Mammary epithelial cell (primary cell): ENCODE measurements at regions of chr3 and their contacts with region 1.

Region 1: GRCh38 chr3:105366326-105367062 is at the start of gene ALCAM:
- DNase-seq: peak; percentile 99
- H3K4me3 ChIP-seq: peak within 1 kb of the TSS; percentile 75 to 91 (median 82)
- H3K27ac ChIP-seq: peak within 1 kb of the TSS; percentile 98
- H3K4me1 ChIP-seq: peaks cover 39% of the 10 kb centered on the region
- H3K27me3 ChIP-seq: no peaks in the 10 kb centered on the region
- CTCF ChIP-seq: peak; percentile 55 to 82
- total RNA-seq, gene ALCAM: 67.6 to 88.4 TPM

Region 2: DNA sequence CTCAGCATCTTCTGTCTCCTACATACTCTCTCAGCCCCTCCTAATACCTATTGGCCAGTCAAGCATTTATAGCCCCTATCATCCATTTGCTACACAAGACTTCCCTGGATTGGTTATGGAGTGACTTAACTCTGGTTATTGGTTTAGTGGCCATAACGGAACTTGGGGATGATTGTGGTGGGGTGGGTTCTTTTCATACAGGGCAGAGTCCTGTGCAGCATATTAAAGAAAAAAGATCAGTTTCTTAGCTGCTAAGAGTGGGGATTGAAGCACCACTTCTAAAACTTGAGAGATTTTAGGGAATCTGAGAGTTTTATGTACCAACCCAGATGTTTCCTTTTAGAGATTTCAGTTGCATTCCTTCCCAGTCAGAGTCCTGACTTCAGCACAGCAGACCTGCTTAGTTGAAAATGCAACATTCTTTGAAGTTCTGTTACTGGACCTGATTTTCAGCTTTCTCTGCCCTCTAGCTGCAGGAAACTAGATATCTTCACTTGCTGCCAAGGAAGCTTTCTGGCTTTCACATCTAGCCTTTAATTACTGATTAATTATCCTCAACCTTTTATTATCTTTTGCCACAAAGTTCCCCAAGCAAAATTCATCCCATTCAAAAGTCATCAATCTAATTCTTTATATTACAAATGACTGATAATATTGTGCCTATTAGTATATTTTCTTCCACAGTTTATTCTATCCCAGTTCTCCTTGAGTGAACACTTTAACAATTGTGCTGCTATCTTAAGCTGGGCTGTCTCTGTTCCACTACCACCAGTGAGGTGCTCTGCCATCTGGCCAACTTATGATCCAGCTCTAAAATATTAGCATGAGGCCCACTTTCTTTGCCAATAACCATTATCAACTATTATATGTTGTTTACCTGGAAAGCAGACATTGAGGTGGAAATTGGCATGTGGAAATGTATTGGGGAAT is 905.8 kb before region 1 on chr3:
- CTCF ChIA-PET with region 1: no interaction called
- dilution Hi-C with region 1: no loop called
- in situ Hi-C with region 1: no loop called
- intact Hi-C with region 1: loop called (anchors 5 kb)
- DNase-seq: peak; percentile 10
- H3K4me3 ChIP-seq: no peak overlapping the region
- H3K27ac ChIP-seq: no peak overlapping the region
- H3K4me1 ChIP-seq: peaks cover 4% of the 10 kb centered on the region
- H3K27me3 ChIP-seq: no peaks in the 10 kb centered on the region
- CTCF ChIP-seq: peak; percentile 34 to 55

Region 3: GRCh38 chr3:104909198-104909597 is 457.3 kb before region 1 on chr3:
- CTCF ChIA-PET with region 1: no interaction called
- dilution Hi-C with region 1: no loop called
- in situ Hi-C with region 1: loop called in 1 of 2 experiments (anchors 25 kb)
- intact Hi-C with region 1: loop called (anchors 2 kb)
- DNase-seq: peak; percentile 44
- H3K4me3 ChIP-seq: no peak overlapping the region
- H3K27ac ChIP-seq: peak overlapping the region; percentile 46
- H3K4me1 ChIP-seq: peaks cover 5% of the 10 kb centered on the region
- H3K27me3 ChIP-seq: no peaks in the 10 kb centered on the region
- CTCF ChIP-seq: no peak

Region 4: GRCh38 chr3:105077060-105077822 is 289.3 kb before region 1 on chr3:
- CTCF ChIA-PET with region 1: no interaction called
- dilution Hi-C with region 1: no loop called
- in situ Hi-C with region 1: no loop called
- intact Hi-C with region 1: loop called (anchors 10 kb)
- DNase-seq: no peak
- H3K4me3 ChIP-seq: no peak overlapping the region
- H3K27ac ChIP-seq: no peak overlapping the region
- H3K4me1 ChIP-seq: no peaks in the 10 kb centered on the region
- H3K27me3 ChIP-seq: no peaks in the 10 kb centered on the region
- CTCF ChIP-seq: no peak

Region 5: DNA sequence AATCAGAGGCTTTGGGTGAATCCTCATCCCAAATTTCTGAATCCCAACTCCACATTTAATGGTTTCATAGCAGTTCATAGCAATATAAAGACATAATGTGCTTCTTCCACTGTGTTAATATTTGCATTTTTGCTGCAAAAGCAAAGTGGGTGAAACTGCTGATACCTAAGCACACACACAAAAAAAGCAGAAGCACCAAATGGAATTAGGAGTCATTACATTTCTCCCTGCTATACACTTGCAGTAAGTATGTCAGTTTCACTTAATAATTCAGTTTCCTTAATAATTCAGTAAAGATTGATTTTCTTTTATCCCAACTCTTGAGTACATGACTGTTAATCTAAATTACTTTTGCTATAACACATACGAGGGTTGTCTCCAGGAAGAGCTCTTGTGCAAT is 48.7 kb before region 1 on chr3:
- CTCF ChIA-PET with region 1: no interaction called
- dilution Hi-C with region 1: no loop called
- in situ Hi-C with region 1: no loop called
- intact Hi-C with region 1: no loop called
- DNase-seq: no peak
- H3K4me3 ChIP-seq: no peak overlapping the region
- H3K27ac ChIP-seq: no peak overlapping the region
- H3K4me1 ChIP-seq: no peaks in the 10 kb centered on the region
- H3K27me3 ChIP-seq: no peaks in the 10 kb centered on the region
- CTCF ChIP-seq: no peak

Region 6: DNA sequence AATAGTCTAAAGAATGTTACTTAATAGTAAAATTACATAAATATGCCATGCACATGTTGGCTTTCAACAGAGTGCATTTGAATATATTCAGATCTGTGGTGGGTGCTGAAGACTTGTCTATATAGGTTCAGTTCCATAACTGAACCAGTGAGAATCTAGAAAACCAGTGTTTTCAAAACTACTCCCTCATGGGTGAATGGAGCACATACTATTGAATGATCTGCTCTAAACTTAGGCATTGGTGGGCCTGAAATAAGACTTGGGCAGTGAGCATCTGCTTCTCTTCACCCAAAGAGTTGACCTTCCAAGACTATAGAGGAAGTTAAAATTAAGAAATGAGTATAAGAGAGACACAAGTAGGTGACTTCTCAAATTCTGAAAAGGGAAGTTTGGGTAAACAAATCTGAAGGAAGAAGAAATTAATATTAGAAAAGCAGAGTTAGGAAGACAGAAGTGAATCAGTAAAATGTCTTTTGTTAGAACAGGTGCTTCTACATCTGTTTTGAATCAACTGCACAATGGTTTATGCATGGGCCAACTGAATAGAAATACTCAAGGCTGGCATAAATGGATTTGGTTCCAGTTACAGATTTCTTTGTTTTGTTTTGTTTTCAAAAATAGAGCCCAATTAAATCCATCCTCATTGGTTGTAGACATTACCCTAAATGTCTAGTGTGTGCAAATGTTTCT is 19.5 kb after region 1 on chr3:
- CTCF ChIA-PET with region 1: interaction called, 4 read pairs
- dilution Hi-C with region 1: no loop called
- in situ Hi-C with region 1: no loop called
- intact Hi-C with region 1: loop called (anchors 1 kb)
- DNase-seq: no peak
- H3K4me3 ChIP-seq: no peak overlapping the region
- H3K27ac ChIP-seq: peak overlapping the region; percentile 83
- H3K4me1 ChIP-seq: peaks cover 14% of the 10 kb centered on the region
- H3K27me3 ChIP-seq: no peaks in the 10 kb centered on the region
- CTCF ChIP-seq: no peak

Region 7: DNA sequence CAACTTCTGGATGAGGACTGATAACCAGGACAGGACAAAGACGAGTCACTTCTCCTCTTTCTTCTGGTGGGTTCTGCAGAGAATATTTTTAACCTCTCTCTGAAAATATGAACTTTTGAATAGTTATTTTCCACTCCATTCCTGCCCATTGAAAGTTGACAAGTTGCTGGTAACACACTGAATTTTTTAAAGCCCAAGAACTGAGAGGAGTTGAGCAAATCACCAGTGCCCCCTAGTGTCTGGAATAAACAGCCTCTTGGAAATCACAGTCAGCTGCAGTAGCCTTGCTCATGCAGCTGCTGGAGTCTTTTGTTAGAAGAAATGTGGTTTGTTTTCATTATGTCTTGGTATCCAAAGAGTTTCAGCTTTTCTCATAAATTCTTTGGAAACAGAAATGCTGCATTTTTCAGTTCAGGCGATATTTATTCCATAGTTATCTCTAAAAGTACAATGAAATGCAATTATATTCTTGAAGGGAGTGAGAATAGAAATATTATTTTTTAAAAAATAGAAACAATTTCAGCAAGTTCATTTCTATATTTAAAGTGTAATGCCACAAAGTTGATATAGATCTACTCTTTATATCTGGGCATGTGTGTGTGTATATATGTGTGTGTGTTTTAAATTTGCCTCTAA is 1243.3 kb after region 1 on chr3:
- CTCF ChIA-PET with region 1: no interaction called
- dilution Hi-C with region 1: no loop called
- in situ Hi-C with region 1: no loop called
- intact Hi-C with region 1: loop called (anchors 5 kb)
- DNase-seq: peak; percentile 62
- H3K4me3 ChIP-seq: no peak overlapping the region
- H3K27ac ChIP-seq: no peak overlapping the region
- H3K4me1 ChIP-seq: peaks cover 10% of the 10 kb centered on the region
- H3K27me3 ChIP-seq: no peaks in the 10 kb centered on the region
- CTCF ChIP-seq: peak; percentile 90 to 92